H1 (cell line): ENCODE measurements at regions of chr1 and their contacts with region 1.

Region 1: GRCh38 chr1:216221260-216221700 is 202.0 kb downstream of the USH2A start:
- DNase-seq: peak; percentile 31 to 58
- H3K4me3 ChIP-seq: peak overlapping the region in 1 of 4 experiments; percentile 21; a peak in 1 of 8 replicates
- H3K27ac ChIP-seq: no peak overlapping the region
- H3K4me1 ChIP-seq: no peaks in the 10 kb centered on the region; a peak in 1 of 7 replicates
- H3K27me3 ChIP-seq: no peaks in the 10 kb centered on the region
- CTCF ChIP-seq: peak in 2 of 3 experiments; percentile 67 to 78; a peak in 3 of 4 replicates
- EP300 ChIP-seq: no peak
- POLR2A ChIP-seq: no peak
- RAD21 ChIP-seq: peak; percentile 73 to 78

Region 2: GRCh38 chr1:216034504-216034903 is 186.8 kb before region 1 on chr1:
- CTCF ChIA-PET with region 1: interaction called, 15 read pairs
- POLR2A ChIA-PET with region 1: no interaction called
- DNase-seq: peak in 1 of 2 experiments; percentile 19
- H3K4me3 ChIP-seq: no peak overlapping the region
- H3K27ac ChIP-seq: no peak overlapping the region
- H3K4me1 ChIP-seq: no peaks in the 10 kb centered on the region
- H3K27me3 ChIP-seq: no peaks in the 10 kb centered on the region
- CTCF ChIP-seq: peak; percentile 56 to 86 (median 80)
- EP300 ChIP-seq: no peak
- POLR2A ChIP-seq: no peak
- RAD21 ChIP-seq: peak; percentile 95 to 96

Region 3: GRCh38 chr1:216210081-216210480 is 11.2 kb before region 1 on chr1:
- CTCF ChIA-PET with region 1: interaction called, 24 read pairs
- POLR2A ChIA-PET with region 1: no interaction called
- DNase-seq: no peak
- H3K4me3 ChIP-seq: no peak overlapping the region
- H3K27ac ChIP-seq: no peak overlapping the region
- H3K4me1 ChIP-seq: no peaks in the 10 kb centered on the region
- H3K27me3 ChIP-seq: no peaks in the 10 kb centered on the region
- CTCF ChIP-seq: no peak
- EP300 ChIP-seq: no peak
- POLR2A ChIP-seq: no peak
- RAD21 ChIP-seq: no peak